H1 (cell line): ENCODE measurements at regions of chr16 and their contacts with region 1.

Region 1: DNA sequence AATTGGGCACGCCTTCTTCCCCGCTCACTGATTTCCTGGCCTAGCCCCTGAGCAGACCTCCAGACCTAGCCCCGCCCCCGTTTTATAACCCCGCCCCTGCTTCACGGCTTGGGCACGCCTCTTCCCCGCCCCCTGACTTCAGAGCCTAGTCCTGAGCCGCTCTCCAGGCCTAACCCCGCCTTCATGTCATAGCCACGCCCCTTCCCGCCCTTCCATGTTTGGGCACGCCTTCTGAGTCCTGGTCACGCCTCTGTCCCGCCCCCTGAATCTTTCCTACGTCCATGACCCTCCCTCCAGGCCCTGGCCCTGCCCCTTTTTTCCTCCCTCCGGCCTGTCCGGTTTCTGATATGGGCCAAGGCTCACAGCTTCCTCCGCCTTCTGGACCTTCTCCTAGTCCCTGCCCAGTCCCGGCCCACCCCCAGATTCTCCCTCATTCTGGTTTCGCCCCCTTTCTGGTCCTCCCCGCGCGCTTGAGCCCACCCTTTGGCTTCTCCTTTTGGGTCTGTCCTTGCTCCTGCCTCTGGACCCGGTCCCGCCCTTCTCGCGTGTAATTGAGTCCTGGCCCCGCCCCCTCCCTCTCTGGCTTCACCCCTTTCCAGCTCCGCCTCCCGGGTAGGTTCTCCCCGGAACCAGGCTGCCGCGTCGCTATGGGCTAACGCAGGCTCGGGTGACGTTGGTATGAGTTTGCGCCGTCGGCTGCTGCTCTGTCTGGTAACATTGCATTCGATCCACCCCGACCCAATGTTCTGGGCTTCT is 15.1 kb upstream of the EEF2K start:
- DNase-seq: peak; percentile 99 to 100
- H3K4me3 ChIP-seq: peak overlapping the region; percentile 66 to 81 (median 74)
- H3K27ac ChIP-seq: peak overlapping the region; percentile 74; the same call in 1 of the 2 replicates
- H3K4me1 ChIP-seq: peaks cover 4 to 14% (median 10%) of the 10 kb centered on the region in 4 experiments; a peak in 6 of 7 replicates
- H3K27me3 ChIP-seq: peaks cover 0 to 6% (median 2%) of the 10 kb centered on the region in 4 experiments; a peak in 4 of 7 replicates
- CTCF ChIP-seq: no peak
- EP300 ChIP-seq: no peak
- POLR2A ChIP-seq: peak in 1 of 2 experiments; percentile 47; a peak in 2 of 3 replicates
- RAD21 ChIP-seq: no peak

Region 2: DNA sequence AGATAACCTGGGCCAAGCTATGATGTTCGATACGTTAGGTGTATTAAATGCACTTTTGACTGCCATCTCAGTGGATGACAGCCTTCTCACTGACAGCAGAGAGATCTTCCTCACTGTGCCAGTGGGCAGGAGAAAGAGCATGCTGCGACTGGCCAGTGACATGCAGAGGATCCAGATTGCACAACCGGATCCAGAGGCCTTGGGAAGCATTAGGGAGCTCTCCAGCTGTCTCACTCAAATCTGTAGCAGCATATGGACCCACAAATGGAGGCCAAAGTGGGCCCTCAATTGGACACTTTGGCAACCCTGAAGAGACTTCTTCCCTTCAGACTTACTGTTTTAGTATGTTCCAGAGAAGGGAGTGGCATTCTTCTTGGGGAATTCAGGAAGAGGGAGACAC is 210.9 kb before region 1 on chr16:
- CTCF ChIA-PET with region 1: interaction called, 16 read pairs
- POLR2A ChIA-PET with region 1: no interaction called
- DNase-seq: no peak
- H3K4me3 ChIP-seq: no peak overlapping the region
- H3K27ac ChIP-seq: no peak overlapping the region
- H3K4me1 ChIP-seq: no peaks in the 10 kb centered on the region
- H3K27me3 ChIP-seq: no peaks in the 10 kb centered on the region
- CTCF ChIP-seq: no peak
- EP300 ChIP-seq: no peak
- POLR2A ChIP-seq: no peak
- RAD21 ChIP-seq: no peak

Region 3: DNA sequence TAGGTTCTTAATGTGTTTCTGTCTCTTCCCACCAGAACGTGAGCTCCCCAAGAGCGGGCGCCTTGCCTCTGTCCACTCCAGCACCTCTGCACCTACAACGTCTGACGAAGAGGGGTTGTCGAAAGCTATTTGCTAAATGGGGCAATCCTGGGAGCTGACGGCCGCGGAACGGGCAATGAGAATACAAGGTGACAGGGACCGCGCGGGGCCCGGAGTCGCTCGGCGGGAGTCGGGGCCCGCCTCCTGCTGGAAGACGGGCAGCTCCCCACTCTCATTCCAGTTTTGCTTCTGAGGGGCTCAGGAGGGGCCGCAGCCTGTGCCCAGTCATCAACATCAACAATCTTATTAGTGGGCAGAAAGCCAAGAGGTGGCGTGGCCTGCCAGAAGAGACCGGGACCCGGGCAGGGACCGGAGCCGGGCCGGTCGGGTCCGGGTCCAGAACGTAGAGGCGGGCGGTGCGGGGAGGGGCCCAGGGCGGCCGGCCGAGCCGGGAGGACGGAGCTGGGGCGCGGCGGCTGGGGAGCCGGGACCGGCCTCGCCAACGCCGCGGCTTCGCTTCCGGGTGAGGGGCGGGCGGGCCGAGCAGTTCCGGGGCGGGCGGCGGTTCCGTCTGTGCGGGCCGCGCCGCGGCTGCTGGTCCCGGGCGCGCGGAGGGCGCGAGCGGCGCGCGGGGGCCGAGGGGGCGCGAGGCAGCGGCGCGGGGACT is 183.3 kb before region 1 on chr16 and contains the start of gene MOSMO:
- CTCF ChIA-PET with region 1: interaction called, 127 read pairs
- POLR2A ChIA-PET with region 1: no interaction called
- DNase-seq: peak in 1 of 2 experiments; percentile 78
- H3K4me3 ChIP-seq: peak within 1 kb of the TSS; percentile 79 to 100 (median 88)
- H3K27ac ChIP-seq: no peak within 1 kb of the TSS; the same call in 1 of the 2 replicates
- H3K4me1 ChIP-seq: peaks cover 0 to 6% (median 1%) of the 10 kb centered on the region in 4 experiments; a peak in 1 of 7 replicates
- H3K27me3 ChIP-seq: 0 out of 7 replicates have a peak, but pooled peaks cover 0 to 2% (median under 1%) of the 10 kb centered on the region in 4 experiments
- CTCF ChIP-seq: no peak
- EP300 ChIP-seq: no peak
- POLR2A ChIP-seq: no peak
- RAD21 ChIP-seq: no peak
- total RNA-seq, gene MOSMO: 13.1 and 14.8 TPM in 2 replicates

Region 4: GRCh38 chr16:22077700-22078313 is 113.1 kb before region 1 on chr16:
- CTCF ChIA-PET with region 1: interaction called, 21 read pairs
- POLR2A ChIA-PET with region 1: interaction called, 3 read pairs
- DNase-seq: peak in 1 of 2 experiments; percentile 84
- H3K4me3 ChIP-seq: no peak overlapping the region
- H3K27ac ChIP-seq: no peak overlapping the region
- H3K4me1 ChIP-seq: no peaks in the 10 kb centered on the region
- H3K27me3 ChIP-seq: peaks cover 0 to 1% (median 0%) of the 10 kb centered on the region in 4 experiments; a peak in 1 of 7 replicates
- CTCF ChIP-seq: peak; percentile 55 to 79 (median 77)
- EP300 ChIP-seq: no peak
- POLR2A ChIP-seq: no peak
- RAD21 ChIP-seq: peak; percentile 81 to 82

Region 5: GRCh38 chr16:22141746-22142145 is 49.2 kb before region 1 on chr16:
- CTCF ChIA-PET with region 1: interaction called, 28 read pairs
- POLR2A ChIA-PET with region 1: no interaction called
- DNase-seq: peak in 1 of 2 experiments; percentile 59
- H3K4me3 ChIP-seq: no peak overlapping the region
- H3K27ac ChIP-seq: no peak overlapping the region
- H3K4me1 ChIP-seq: no peaks in the 10 kb centered on the region
- H3K27me3 ChIP-seq: no peaks in the 10 kb centered on the region; a peak in 1 of 7 replicates
- CTCF ChIP-seq: peak; percentile 44 to 88 (median 65)
- EP300 ChIP-seq: no peak
- POLR2A ChIP-seq: no peak
- RAD21 ChIP-seq: peak; percentile 11 to 39; a peak in 3 of 4 replicates

Region 6: GRCh38 chr16:22297114-22297878 is 106.3 kb after region 1 on chr16 and contains the start of gene POLR3E:
- CTCF ChIA-PET with region 1: interaction called, 13 read pairs
- POLR2A ChIA-PET with region 1: interaction called, 6 read pairs
- DNase-seq: peak; percentile 96 to 100
- H3K4me3 ChIP-seq: peak within 1 kb of the TSS; percentile 63 to 96 (median 93)
- H3K27ac ChIP-seq: peak within 1 kb of the TSS; percentile 93
- H3K4me1 ChIP-seq: peaks cover 0 to 2% (median under 1%) of the 10 kb centered on the region in 4 experiments; a peak in 2 of 7 replicates
- H3K27me3 ChIP-seq: no peaks in the 10 kb centered on the region
- CTCF ChIP-seq: peak; percentile 81 to 93 (median 89)
- EP300 ChIP-seq: peak in 1 of 2 experiments; percentile 30; a peak in 1 of 3 replicates
- POLR2A ChIP-seq: peak; percentile 64 to 86
- RAD21 ChIP-seq: peak; percentile 85 to 87
- total RNA-seq, gene POLR3E: 91.3 and 96.5 TPM in 2 replicates